BJ (cell line): ENCODE measurements at regions of chr4 and their contacts with region 1.

Region 1: DNA sequence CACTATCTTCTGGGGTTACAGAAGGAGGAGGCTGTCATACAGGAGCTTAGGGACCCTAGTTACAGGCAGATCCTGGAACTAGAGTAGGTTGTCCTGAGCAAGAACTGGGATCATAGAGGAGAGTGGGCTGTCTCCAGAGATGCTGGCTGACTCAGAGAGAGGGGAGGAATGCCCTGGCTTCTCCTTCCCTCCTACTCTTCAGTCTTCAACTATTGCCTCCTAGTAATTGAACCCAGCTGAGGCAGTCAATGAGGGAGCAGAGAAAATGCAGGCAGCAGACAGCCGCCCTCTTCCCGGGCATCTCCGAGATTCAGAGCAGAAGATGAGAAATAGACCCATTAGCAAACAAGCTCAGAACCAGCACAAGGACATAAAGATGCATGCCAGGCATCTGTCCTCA is 118.3 kb upstream of the PDE5A start:
- DNase-seq: no peak
- H3K4me3 ChIP-seq: no peak overlapping the region
- H3K27me3 ChIP-seq: no peaks in the 10 kb centered on the region
- CTCF ChIP-seq: no peak

Region 2: GRCh38 chr4:119735165-119735651 is 11.7 kb before region 1 on chr4:
- CTCF ChIA-PET with region 1: interaction called, 16 read pairs
- POLR2A ChIA-PET with region 1: no interaction called
- DNase-seq: peak; percentile 95
- H3K4me3 ChIP-seq: no peak overlapping the region
- H3K27me3 ChIP-seq: no peaks in the 10 kb centered on the region
- CTCF ChIP-seq: no peak

Region 3: GRCh38 chr4:119816473-119816872 is 69.5 kb after region 1 on chr4:
- CTCF ChIA-PET with region 1: no interaction called
- POLR2A ChIA-PET with region 1: no interaction called
- DNase-seq: no peak
- H3K4me3 ChIP-seq: no peak overlapping the region
- H3K27me3 ChIP-seq: no peaks in the 10 kb centered on the region
- CTCF ChIP-seq: no peak